A673 (cell line): ENCODE measurements at regions of chr17 and their contacts with region 1.

Region 1: DNA sequence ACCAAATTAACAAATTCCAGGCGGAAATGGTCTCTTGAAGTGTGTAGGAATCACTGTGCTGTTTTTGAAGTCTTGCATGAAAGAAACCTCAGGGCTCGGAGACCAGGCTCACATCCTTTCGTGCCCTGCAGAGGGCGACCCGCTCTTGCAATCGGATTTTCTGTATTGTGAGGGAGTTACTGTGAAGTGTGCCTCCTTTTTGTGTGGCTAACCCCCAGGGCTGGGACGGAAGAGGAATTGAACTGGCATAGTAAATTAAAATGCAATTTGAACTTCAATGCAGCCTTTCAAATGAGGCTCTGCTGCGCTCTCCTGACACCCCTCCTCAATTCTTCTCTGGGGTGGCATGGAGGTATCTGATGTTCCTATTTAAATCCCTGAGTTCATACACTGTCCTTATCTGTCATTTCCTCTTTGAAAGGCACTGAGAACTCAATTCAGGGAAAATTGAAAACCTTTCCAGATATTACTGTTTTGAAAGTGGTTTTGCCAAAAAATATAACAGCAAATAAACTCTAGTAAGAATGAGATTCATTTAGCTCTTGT is 51.5 kb upstream of the MGAT5B start:
- DNase-seq: peak; percentile 79
- H3K4me3 ChIP-seq: no peak overlapping the region
- H3K27ac ChIP-seq: no peak overlapping the region
- H3K4me1 ChIP-seq: peaks cover 16% of the 10 kb centered on the region
- H3K27me3 ChIP-seq: no peaks in the 10 kb centered on the region
- CTCF ChIP-seq: peak; percentile 91

Region 2: DNA sequence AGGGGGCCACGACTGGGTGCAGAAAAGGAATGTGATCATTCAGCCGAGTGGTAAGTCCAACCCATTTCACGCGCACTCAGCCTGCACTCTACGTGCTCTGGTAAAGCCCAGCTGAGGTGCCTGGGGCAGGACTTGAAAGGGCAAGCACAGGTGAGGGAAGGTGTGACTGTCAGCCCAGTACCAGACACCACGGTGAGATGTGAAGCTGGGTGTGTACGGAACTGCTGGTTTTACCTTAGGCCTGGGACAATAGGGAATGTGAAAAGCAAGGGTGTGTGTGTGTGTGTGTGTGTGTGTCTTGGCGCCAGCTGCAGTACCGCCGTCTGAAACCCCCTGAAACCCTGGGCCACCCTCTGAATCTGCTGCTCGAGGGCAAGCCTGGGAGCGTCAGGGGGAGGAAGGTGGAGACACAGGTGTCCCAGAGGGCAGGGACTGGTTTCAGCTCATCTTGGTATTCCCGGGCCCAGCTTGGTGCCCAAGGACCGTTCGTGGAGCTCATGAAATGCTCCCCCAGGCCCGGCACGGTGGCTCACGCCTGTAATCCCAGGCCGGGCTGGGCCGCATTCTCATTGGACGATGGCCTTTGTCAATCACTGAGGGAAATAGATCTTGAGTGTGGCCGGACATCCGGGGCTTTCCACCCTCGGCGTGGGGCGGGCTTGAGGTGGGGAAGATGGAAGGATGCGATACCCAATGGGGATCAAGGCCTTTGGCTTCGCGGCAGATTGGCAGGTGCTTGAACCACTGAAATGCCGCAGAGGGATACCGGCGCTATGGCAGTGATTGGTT is 145.3 kb before region 1 on chr17:
- CTCF ChIA-PET with region 1: no interaction called
- POLR2A ChIA-PET with region 1: no interaction called
- intact Hi-C with region 1: no loop called
- DNase-seq: peak; percentile 100
- H3K4me3 ChIP-seq: peak overlapping the region; percentile 66
- H3K27ac ChIP-seq: peak overlapping the region; percentile 64
- H3K4me1 ChIP-seq: peaks cover 16% of the 10 kb centered on the region
- H3K27me3 ChIP-seq: no peaks in the 10 kb centered on the region
- CTCF ChIP-seq: no peak

Region 3: GRCh38 chr17:76956846-76957540 is 140.3 kb after region 1 on chr17:
- CTCF ChIA-PET with region 1: no interaction called
- POLR2A ChIA-PET with region 1: interaction called, 27 read pairs
- intact Hi-C with region 1: no loop called
- DNase-seq: no peak
- H3K4me3 ChIP-seq: no peak overlapping the region
- H3K27ac ChIP-seq: no peak overlapping the region
- H3K4me1 ChIP-seq: no peaks in the 10 kb centered on the region
- H3K27me3 ChIP-seq: no peaks in the 10 kb centered on the region
- CTCF ChIP-seq: no peak

Region 4: DNA sequence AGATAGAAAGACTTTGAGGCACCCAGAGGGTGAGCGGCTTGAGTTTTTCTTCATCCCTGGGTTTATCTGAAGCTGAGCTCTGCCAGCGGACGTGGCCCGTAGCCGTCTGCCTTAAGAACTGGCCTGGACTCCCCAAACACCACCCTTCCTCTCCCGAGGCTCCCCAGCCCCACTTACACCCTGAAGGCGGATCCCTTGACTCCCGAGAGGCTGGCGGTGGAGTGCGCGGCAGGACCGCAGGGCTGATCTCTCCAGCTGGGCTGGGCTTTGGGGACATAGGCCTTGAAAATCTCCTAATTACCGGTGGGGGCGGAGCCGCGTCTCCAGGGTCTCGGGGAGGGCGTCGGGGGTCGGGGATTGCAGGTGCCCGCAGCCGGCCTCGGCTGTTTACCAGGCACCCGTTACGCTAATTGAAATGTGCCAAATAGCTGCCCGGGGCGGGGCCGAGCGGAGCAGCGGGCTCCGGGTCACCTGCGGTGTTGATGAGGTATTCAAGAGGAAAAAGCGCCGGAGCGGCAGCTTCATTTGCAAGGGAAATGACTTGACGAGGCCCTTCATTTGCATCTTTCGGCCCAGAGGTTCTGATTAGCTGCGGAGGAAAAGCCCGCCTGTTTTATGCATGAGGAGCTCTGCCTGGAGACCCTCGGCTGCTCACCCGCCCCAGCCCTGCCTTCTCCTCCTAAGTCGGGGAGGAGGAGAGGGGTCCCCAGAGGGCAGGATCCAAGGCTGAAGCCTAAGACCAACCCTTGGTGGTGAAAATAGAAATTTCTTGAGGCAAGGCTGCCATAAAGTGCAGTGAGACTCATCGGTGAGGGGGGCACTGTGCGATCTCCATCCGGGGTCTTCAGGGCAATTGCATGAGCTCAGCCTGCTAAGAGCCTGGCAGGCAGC is 152.3 kb after region 1 on chr17:
- CTCF ChIA-PET with region 1: no interaction called
- POLR2A ChIA-PET with region 1: no interaction called
- intact Hi-C with region 1: no loop called
- DNase-seq: peak; percentile 86
- H3K4me3 ChIP-seq: peak overlapping the region; percentile 48
- H3K27ac ChIP-seq: peak overlapping the region; percentile 70
- H3K4me1 ChIP-seq: peaks cover 10% of the 10 kb centered on the region
- H3K27me3 ChIP-seq: no peaks in the 10 kb centered on the region
- CTCF ChIP-seq: no peak

Region 5: DNA sequence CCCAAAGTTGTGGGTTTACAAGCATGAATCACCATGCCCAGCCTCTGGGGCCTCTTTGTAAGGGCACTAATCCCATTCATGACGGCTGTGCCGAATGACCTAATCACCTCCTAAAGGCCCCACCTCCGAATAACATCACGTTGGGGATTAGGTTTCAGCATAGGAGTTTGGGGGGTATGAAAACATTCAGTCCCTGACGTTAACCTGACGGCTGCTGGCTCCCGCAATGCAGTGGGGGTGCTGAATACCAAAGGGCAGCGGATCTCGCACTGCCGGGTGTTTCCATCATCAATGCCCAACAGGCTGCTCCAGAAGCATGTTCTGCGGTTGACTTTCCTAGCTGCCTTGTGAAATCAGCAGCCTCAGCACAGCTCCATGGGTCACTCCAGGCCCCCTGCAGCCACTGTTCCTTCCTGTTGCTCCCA is 203.3 kb after region 1 on chr17:
- CTCF ChIA-PET with region 1: no interaction called
- POLR2A ChIA-PET with region 1: no interaction called
- intact Hi-C with region 1: no loop called
- DNase-seq: no peak
- H3K4me3 ChIP-seq: no peak overlapping the region
- H3K27ac ChIP-seq: no peak overlapping the region
- H3K4me1 ChIP-seq: no peaks in the 10 kb centered on the region
- H3K27me3 ChIP-seq: no peaks in the 10 kb centered on the region
- CTCF ChIP-seq: no peak

Region 6: GRCh38 chr17:77068915-77069314 is 252.3 kb after region 1 on chr17:
- CTCF ChIA-PET with region 1: no interaction called
- POLR2A ChIA-PET with region 1: no interaction called
- intact Hi-C with region 1: loop called (anchors 5 kb)
- DNase-seq: no peak
- H3K4me3 ChIP-seq: no peak overlapping the region
- H3K27ac ChIP-seq: no peak overlapping the region
- H3K4me1 ChIP-seq: no peaks in the 10 kb centered on the region
- H3K27me3 ChIP-seq: no peaks in the 10 kb centered on the region
- CTCF ChIP-seq: no peak

Region 7: DNA sequence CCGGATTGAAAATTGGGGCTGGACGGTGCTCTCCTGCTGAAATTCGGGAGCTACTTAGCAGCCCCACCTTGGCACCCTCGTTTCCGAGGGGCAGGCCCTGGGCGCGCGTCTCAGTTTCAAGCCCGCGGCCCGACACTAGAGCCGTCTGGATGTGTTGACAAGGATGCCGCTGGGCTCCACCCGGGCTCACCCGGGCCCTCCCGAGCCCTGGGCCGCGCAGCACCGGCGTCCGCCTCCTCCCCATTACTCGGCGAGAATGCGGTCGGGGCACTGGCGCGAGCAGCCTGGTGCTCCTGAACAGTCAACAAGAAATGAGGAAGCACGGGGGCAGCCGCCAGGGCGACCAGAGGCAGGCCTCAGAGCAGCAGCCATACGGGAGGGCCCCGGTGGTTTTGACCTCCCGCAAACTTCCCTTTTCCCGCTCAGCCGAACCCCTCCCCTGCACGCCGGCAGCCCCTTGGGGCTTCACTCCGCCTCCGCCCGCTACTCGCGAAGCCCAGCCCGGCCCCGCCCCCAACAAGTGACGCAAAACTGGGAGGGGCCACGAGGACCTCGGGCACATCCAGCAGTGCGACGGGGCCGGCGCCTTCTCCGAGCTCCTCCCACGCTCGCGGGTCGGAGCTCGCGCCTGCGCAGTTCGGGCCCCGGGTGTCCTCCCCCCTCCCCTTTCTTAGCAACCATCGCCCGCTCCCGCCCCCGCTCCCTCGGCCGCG is 323.7 kb after region 1 on chr17:
- CTCF ChIA-PET with region 1: no interaction called
- POLR2A ChIA-PET with region 1: no interaction called
- intact Hi-C with region 1: no loop called
- DNase-seq: peak; percentile 99
- H3K4me3 ChIP-seq: peak overlapping the region; percentile 93
- H3K27ac ChIP-seq: peak overlapping the region; percentile 83
- H3K4me1 ChIP-seq: peaks cover 20% of the 10 kb centered on the region
- H3K27me3 ChIP-seq: no peaks in the 10 kb centered on the region
- CTCF ChIP-seq: no peak

Region 8: DNA sequence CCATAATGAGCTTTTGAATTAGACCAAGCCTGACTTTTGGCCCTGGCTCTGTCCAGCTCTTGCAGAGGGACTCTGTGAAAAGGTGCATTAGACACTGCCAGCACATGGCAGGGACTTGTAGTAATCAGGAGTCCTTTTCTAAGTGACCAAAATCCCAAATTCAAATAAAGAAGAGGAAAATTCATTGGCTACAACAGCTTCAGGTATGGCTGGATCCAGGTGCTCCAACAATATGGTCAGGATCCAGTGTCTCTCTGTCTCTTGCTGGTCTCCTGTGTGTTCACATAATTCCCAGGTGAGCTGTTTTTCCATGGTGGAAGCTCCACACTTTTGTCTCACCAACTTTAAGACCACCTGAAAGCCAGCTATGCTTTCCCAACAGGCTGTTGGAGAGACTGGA is 783.0 kb after region 1 on chr17:
- CTCF ChIA-PET with region 1: interaction called, 12 read pairs
- POLR2A ChIA-PET with region 1: no interaction called
- intact Hi-C with region 1: no loop called
- DNase-seq: no peak
- H3K4me3 ChIP-seq: no peak overlapping the region
- H3K27ac ChIP-seq: no peak overlapping the region
- H3K4me1 ChIP-seq: peaks cover 4% of the 10 kb centered on the region
- H3K27me3 ChIP-seq: no peaks in the 10 kb centered on the region
- CTCF ChIP-seq: no peak